ENCODE measurements at regions of chr22 and their contacts with region 1.

Region 1: DNA sequence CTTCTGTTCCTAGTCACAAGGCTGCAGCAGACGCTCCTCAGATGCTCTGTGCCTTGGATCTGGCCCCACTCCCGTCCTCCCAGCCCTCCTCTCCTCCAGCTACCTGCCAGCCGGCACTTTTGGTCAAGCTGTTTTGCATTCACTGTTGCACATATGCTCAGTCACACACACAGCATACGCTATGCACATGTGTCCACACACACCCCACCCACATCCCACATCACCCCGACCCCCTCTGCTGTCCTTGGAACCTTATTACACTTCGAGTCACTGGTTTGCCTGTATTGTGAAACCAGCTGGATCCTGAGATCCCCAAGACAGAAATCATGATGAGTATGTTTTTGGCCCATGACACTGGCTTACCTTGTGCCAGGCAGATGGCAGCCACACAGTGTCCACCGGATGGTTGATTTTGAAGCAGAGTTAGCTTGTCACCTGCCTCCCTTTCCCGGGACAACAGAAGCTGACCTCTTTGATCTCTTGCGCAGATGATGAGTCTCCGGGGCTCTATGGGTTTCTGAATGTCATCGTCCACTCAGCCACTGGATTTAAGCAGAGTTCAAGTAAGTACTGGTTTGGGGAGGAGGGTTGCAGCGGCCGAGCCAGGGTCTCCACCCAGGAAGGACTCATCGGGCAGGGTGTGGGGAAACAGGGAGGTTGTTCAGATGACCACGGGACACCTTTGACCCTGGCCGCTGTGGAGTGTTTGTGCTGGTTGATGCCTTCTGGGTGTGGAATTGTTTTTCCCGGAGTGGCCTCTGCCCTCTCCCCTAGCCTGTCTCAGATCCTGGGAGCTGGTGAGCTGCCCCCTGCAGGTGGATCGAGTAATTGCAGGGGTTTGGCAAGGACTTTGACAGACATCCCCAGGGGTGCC is 109.8 kb downstream of the BCR start:
- DNase-seq: peak in 7 of 10 donors; percentile 40 to 90 (median 62)
- H3K4me3 ChIP-seq: no peak overlapping the region
- H3K27ac ChIP-seq: peak overlapping the region in 38 of 59 donors; percentile 3 to 91 (median 46)
- H3K27me3 ChIP-seq: no peaks in the 10 kb centered on the region
- CTCF ChIP-seq: peak; percentile 41 to 83 (median 73)

Region 2: GRCh38 chr22:23008887-23009286 is 281.2 kb before region 1 on chr22:
- intact Hi-C with region 1: no loop called
- DNase-seq: no peak
- H3K4me3 ChIP-seq: no peak overlapping the region
- H3K27ac ChIP-seq: no peak overlapping the region
- H3K27me3 ChIP-seq: peaks cover 0 to 4% (median 0%) of the 10 kb centered on the region in 45 donors
- CTCF ChIP-seq: no peak

Region 3: DNA sequence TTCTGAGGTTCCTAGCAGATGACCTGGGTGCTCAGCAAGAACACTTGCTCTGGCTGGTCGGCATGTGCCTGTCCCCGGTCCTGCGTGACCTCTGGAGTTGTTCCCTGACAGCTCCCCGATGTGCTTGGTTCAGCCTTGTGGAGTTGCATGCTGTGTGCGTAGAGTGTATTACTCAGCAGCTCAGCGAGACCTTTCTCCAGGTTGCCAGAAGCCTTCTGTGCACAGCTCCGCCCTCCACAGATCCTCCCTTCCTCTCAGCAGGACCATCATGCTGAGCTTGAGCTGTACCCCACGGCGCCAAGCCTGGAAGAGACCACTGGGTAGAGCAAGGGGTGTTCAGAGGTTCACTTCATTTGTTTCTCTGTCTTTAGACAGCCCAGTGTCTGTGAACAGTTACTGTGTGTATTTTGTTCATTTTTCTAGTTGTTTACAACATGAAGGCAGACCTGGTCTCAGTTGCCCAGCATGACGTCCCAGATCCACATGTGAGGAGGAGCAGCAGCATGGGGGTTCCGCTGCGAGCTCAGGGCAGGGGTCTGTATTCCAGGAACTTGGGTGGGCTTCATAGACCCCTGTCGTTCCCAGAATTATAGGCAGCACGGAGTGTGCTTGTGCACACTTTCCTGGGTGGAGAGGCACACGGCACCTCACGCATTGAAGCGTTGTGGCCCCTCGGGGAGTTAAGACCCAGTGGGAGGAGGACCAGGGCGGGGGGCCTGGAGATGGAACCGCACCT is 141.4 kb after region 1 on chr22:
- intact Hi-C with region 1: no loop called
- DNase-seq: no peak
- H3K4me3 ChIP-seq: no peak overlapping the region
- H3K27ac ChIP-seq: no peak overlapping the region
- H3K27me3 ChIP-seq: peaks cover 0 to 6% (median 0%) of the 10 kb centered on the region in 45 donors
- CTCF ChIP-seq: no peak

Region 4: GRCh38 chr22:23527971-23528740 is 238.1 kb after region 1 on chr22:
- intact Hi-C with region 1: loop called in 1 of 2 experiments (anchors 5 kb)
- DNase-seq: peak in 4 of 10 donors; percentile 10 to 36 (median 22)
- H3K4me3 ChIP-seq: no peak overlapping the region
- H3K27ac ChIP-seq: no peak overlapping the region
- H3K27me3 ChIP-seq: no peaks in the 10 kb centered on the region
- CTCF ChIP-seq: no peak

Measured in dorsolateral prefrontal cortex (tissue), 120 donors.